ENCODE measurements at regions of chr1 and their contacts with region 1.

Region 1: GRCh38 chr1:210951279-210951678 is 182.7 kb downstream of the KCNH1 start:
- DNase-seq: no peak
- H3K4me3 ChIP-seq: no peak overlapping the region
- H3K27ac ChIP-seq: no peak overlapping the region
- H3K4me1 ChIP-seq: no peaks in the 10 kb centered on the region
- H3K27me3 ChIP-seq: peaks cover 1% of the 10 kb centered on the region
- CTCF ChIP-seq: no peak

Region 2: GRCh38 chr1:210407207-210407886 is 543.9 kb before region 1 on chr1:
- CTCF ChIA-PET with region 1: no interaction called
- dilution Hi-C with region 1: no loop called
- in situ Hi-C with region 1: no loop called
- intact Hi-C with region 1: loop called (anchors 1 kb)
- DNase-seq: peak; percentile 50
- H3K4me3 ChIP-seq: no peak overlapping the region
- H3K27ac ChIP-seq: no peak overlapping the region
- H3K4me1 ChIP-seq: peaks cover 21% of the 10 kb centered on the region
- H3K27me3 ChIP-seq: no peaks in the 10 kb centered on the region
- CTCF ChIP-seq: peak; percentile 96 to 99

Region 3: GRCh38 chr1:210448297-210448892 is 502.9 kb before region 1 on chr1:
- CTCF ChIA-PET with region 1: no interaction called
- dilution Hi-C with region 1: no loop called
- in situ Hi-C with region 1: no loop called
- intact Hi-C with region 1: loop called (anchors 5 kb)
- DNase-seq: peak; percentile 18
- H3K4me3 ChIP-seq: no peak overlapping the region
- H3K27ac ChIP-seq: no peak overlapping the region
- H3K4me1 ChIP-seq: no peaks in the 10 kb centered on the region
- H3K27me3 ChIP-seq: no peaks in the 10 kb centered on the region
- CTCF ChIP-seq: peak; percentile 63 to 68

Region 4: DNA sequence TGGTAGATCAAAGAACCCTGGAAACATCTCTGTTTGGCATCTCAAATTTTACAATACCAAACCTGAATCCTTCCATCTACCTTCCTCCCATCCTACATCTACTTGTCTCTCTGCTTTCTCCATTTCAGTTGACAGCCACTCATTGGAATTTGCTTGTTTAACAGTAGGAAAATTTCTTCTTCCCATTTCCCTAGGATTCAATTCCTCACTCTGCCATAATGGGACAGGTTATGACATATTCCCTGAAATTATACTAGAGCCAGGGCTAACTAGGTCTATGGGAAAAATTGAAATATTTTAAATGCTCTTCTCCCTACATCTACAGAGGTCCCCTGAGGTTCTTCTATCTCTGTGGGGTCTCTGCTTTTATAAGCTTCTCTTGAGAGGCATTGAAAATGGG is 75.0 kb before region 1 on chr1:
- CTCF ChIA-PET with region 1: no interaction called
- dilution Hi-C with region 1: no loop called
- in situ Hi-C with region 1: no loop called
- intact Hi-C with region 1: no loop called
- DNase-seq: no peak
- H3K4me3 ChIP-seq: no peak overlapping the region
- H3K27ac ChIP-seq: no peak overlapping the region
- H3K4me1 ChIP-seq: no peaks in the 10 kb centered on the region
- H3K27me3 ChIP-seq: peaks cover 19% of the 10 kb centered on the region
- CTCF ChIP-seq: no peak